ENCODE measurements at regions of chr2 and their contacts with region 1.

Region 1: GRCh38 chr2:18991177-18992168 is 366.9 kb downstream of the OSR1 start:
- DNase-seq: peak; percentile 88 to 99
- H3K4me3 ChIP-seq: peak overlapping the region; percentile 16; the same call in 1 of the 2 replicates
- H3K27ac ChIP-seq: peak overlapping the region; percentile 87
- H3K4me1 ChIP-seq: peaks cover 44% of the 10 kb centered on the region
- H3K27me3 ChIP-seq: no peaks in the 10 kb centered on the region
- CTCF ChIP-seq: no peak

Region 2: GRCh38 chr2:18749912-18750526 is 241.5 kb before region 1 on chr2:
- CTCF ChIA-PET with region 1: no interaction called
- POLR2A ChIA-PET with region 1: no interaction called
- intact Hi-C with region 1: loop called (anchors 1 kb)
- DNase-seq: peak; percentile 47 to 51
- H3K4me3 ChIP-seq: no peak overlapping the region
- H3K27ac ChIP-seq: no peak overlapping the region
- H3K4me1 ChIP-seq: peaks cover 31% of the 10 kb centered on the region
- H3K27me3 ChIP-seq: no peaks in the 10 kb centered on the region
- CTCF ChIP-seq: peak; percentile 95

Region 3: DNA sequence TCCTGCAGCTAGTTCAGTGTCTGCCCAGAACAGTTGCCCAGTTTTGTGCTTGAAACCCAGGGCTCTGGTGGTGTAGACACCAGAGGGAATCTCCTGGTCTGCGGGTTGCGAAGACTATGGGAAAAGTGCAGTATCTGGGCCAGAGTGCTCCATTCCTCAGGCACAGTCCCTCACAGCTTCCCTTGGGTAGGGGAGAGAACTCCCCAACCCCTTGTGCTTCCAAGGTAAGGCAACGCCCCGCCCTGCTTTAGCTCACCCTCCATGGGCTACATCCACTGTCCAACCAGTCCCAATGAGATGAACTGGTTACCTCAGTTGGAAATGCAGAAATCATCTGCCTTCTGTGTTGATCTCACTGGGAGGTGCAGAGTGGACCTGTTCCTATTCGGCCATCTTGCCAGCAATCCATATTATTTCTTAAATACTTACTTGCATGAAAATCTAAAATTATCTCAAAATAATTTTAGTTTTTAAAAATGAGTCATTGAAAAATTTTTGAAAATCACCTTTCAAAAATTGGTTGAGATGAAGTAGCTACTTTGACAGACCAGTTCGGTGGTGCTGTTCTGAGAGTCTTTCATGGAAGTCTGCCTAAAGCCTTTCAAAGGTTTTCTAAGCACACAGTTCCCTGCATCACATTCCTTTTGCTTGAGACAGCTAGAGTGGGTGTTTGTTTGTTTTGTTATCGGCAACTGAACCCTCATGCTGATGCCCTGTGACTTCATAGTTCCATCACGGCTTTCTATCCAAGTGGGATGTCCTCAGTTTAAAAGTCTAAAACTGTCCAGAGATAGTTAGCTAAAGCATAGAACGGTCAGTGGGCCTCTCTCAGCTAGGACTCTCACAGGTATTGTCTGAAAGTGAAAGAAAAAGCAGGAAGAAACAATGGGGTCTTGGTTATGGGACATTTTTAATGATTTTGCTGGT is 29.3 kb after region 1 on chr2:
- CTCF ChIA-PET with region 1: no interaction called
- POLR2A ChIA-PET with region 1: no interaction called
- intact Hi-C with region 1: loop called (anchors 1 kb)
- DNase-seq: peak; percentile 10 to 42
- H3K4me3 ChIP-seq: no peak overlapping the region
- H3K27ac ChIP-seq: no peak overlapping the region
- H3K4me1 ChIP-seq: no peaks in the 10 kb centered on the region
- H3K27me3 ChIP-seq: no peaks in the 10 kb centered on the region
- CTCF ChIP-seq: no peak

Region 4: DNA sequence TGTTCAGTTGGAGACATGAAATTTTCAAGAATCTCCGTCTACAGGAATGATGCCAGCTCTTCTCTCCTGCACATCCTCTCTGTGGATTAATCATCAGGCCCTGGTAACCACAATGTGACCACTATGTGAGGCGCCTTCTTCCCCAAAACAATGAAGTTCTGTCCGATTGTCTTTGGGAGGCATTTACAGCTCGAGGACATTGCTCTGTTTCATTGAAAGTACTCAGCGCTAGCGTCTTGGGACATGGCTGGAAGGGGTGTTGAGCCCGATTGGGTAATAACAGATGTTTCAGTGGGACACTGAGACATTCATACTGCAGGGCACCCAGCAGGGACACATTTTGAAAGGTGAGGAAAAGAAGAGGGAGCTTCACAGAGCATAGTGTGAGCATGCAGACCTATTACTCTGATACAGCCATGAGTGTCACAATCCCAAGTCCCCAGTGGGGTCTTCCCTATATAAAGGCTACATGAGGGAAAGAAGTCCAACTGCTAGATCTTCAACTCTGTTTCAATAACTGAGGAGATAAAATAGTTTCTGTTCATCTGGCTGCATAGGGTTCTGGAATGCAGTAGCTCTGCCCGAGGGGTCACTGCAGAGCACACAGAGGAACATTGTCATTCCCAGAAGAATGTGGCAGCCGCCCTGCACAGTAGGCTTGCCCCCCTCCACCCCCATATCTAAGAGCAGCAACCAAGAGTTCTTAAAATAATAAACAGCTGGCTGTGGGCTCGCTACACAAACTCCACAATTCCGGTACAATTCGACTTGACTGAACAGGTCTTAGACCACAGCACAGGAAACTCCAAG is 129.7 kb after region 1 on chr2:
- CTCF ChIA-PET with region 1: no interaction called
- POLR2A ChIA-PET with region 1: interaction called, 3 read pairs
- intact Hi-C with region 1: loop called (anchors 5 kb)
- DNase-seq: peak; percentile 51 to 80
- H3K4me3 ChIP-seq: no peak overlapping the region
- H3K27ac ChIP-seq: peak overlapping the region; percentile 45
- H3K4me1 ChIP-seq: peaks cover 32% of the 10 kb centered on the region
- H3K27me3 ChIP-seq: no peaks in the 10 kb centered on the region
- CTCF ChIP-seq: no peak

Region 5: GRCh38 chr2:19312949-19313348 is 321.5 kb after region 1 on chr2:
- CTCF ChIA-PET with region 1: interaction called, 3 read pairs
- POLR2A ChIA-PET with region 1: interaction called, 10 read pairs
- intact Hi-C with region 1: no loop called
- DNase-seq: no peak
- H3K4me3 ChIP-seq: no peak overlapping the region
- H3K27ac ChIP-seq: no peak overlapping the region
- H3K4me1 ChIP-seq: no peaks in the 10 kb centered on the region
- H3K27me3 ChIP-seq: no peaks in the 10 kb centered on the region
- CTCF ChIP-seq: 0 out of 2 replicates have a peak, but pooled peaks have one; percentile 22

Measured in PC-9 (cell line).